A673 (cell line): ENCODE measurements at regions of chr13 and their contacts with region 1.

Region 1: GRCh38 chr13:30617315-30618185 is at the start of gene USPL1:
- DNase-seq: peak; percentile 99
- H3K4me3 ChIP-seq: peak within 1 kb of the TSS; percentile 82
- H3K27ac ChIP-seq: peak within 1 kb of the TSS; percentile 99
- H3K4me1 ChIP-seq: peaks cover 7% of the 10 kb centered on the region
- H3K27me3 ChIP-seq: no peaks in the 10 kb centered on the region
- CTCF ChIP-seq: no peak; the same call in 1 of the 2 replicates
- total RNA-seq, gene USPL1: 22.8 and 28.5 TPM in 2 replicates

Region 2: GRCh38 chr13:30465585-30466357 is 151.8 kb before region 1 on chr13 and contains the start of gene HMGB1:
- CTCF ChIA-PET with region 1: no interaction called
- POLR2A ChIA-PET with region 1: no interaction called
- intact Hi-C with region 1: loop called (anchors 1 kb)
- DNase-seq: peak; percentile 100
- H3K4me3 ChIP-seq: peak within 1 kb of the TSS; percentile 82
- H3K27ac ChIP-seq: peak within 1 kb of the TSS; percentile 100
- H3K4me1 ChIP-seq: peaks cover 32% of the 10 kb centered on the region
- H3K27me3 ChIP-seq: no peaks in the 10 kb centered on the region
- CTCF ChIP-seq: no peak
- total RNA-seq, gene HMGB1: 1,533 and 1,602 TPM in 2 replicates

Region 3: DNA sequence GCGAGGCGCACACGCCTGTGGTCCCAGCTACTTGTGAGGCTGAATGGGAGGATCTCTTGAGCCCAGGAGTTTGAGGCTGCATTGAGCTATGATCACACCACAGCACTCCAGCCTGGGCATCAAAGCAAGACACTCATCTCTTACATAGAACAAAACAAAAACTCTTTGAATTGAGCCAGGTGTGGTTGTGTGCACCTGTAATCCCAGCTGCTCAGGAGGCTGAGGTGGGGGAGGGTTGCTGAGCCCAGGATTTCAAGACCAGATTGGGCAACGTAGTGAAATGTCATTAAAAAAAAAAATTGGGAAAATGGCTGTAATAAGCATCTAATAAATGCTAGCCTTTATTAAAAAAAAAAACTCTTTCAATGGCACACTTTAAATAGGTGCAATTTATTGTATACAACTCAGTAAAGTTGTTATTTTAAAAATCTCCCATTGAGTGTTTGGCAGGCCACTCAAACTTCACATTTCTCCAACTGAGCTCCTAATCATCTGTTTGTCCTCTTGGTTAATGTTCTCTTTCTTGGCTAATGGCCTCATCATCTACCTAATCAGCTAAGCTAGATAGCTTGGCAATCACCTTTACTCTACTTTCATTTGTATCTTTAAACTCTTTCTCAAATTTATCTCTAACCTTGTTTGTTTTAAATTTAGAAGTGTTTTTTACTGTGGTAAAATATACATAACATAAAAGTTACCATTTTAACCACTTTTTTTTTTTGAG is 123.7 kb before region 1 on chr13:
- CTCF ChIA-PET with region 1: no interaction called
- POLR2A ChIA-PET with region 1: no interaction called
- intact Hi-C with region 1: no loop called
- DNase-seq: no peak
- H3K4me3 ChIP-seq: no peak overlapping the region
- H3K27ac ChIP-seq: no peak overlapping the region
- H3K4me1 ChIP-seq: no peaks in the 10 kb centered on the region
- H3K27me3 ChIP-seq: no peaks in the 10 kb centered on the region
- CTCF ChIP-seq: no peak

Region 4: GRCh38 chr13:30673669-30674521 is 56.3 kb after region 1 on chr13:
- CTCF ChIA-PET with region 1: no interaction called
- POLR2A ChIA-PET with region 1: no interaction called
- intact Hi-C with region 1: no loop called
- DNase-seq: peak; percentile 89
- H3K4me3 ChIP-seq: peak overlapping the region; percentile 54
- H3K27ac ChIP-seq: peak overlapping the region; percentile 63
- H3K4me1 ChIP-seq: no peaks in the 10 kb centered on the region
- H3K27me3 ChIP-seq: no peaks in the 10 kb centered on the region
- CTCF ChIP-seq: peak; percentile 60

Region 5: DNA sequence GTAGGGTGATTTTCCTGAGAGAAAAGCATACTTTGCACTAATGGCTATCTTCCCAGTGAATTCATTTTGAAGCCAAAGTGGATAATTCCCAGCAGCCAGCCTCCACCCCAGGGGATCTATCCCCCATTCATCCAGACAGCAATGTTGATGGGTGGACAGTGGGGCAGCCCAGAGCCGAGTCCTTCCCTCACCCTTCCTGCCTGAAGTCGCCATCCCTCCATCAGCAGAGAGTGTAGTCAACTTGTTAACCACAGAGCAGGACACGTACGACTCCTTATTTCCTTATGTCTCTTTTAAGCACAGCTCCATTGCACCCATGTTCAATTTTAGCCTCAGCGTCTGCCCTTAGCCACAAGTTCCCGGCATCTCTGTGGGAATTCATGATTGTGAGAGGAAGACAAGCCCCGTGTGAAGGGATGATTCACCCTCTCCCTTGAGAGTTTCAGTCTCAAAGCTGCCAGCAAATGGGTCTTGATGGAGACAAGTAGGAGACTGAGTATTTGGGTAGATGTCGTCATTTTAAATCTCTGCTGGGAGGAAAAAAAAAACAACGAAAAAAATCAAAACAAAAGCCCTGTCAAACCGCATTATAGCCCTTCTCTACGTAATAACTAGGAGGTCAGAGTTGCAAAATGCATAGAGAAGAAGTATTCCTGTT is 230.2 kb after region 1 on chr13:
- CTCF ChIA-PET with region 1: no interaction called
- POLR2A ChIA-PET with region 1: no interaction called
- intact Hi-C with region 1: no loop called
- DNase-seq: peak; percentile 95
- H3K4me3 ChIP-seq: no peak overlapping the region
- H3K27ac ChIP-seq: peak overlapping the region; percentile 35
- H3K4me1 ChIP-seq: peaks cover 10% of the 10 kb centered on the region
- H3K27me3 ChIP-seq: no peaks in the 10 kb centered on the region
- CTCF ChIP-seq: no peak